Activated CD4-positive, alpha-beta memory T cell treated with anti-CD3 and anti-CD28 coated beads for 36 hours (primary cell): ENCODE measurements at regions of chr3 and their contacts with region 1.

Region 1: DNA sequence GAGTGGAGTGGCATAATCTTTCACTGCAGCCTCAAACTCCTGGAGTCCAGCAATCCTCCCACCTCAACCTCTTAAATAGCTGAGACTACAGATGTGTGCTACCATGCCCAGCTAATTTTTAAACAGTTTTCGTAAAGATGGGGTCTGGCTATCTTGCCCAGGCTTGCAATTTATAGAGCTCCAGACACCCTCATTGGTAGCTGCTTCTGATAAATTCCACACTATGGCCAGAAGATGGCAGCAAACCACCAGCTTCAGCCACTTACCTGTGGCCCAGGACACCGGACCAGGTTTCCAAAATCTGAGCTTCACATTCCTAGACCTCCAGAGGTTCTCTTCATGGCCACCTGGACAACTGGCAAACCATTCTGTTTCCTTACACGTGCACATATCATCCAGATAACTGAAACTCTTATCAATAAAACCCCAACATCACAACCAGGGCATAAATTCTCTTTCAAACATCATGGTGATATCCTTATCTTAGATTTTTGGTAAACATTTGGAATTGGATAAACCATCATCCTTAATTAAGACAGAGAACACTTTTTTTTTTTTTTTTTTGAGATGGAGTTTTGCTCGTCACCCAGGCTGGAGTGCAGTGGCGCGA is 28.9 kb downstream of the FBXW12 start:
- DNase-seq: peak; percentile 74
- H3K4me3 Mint-ChIP-seq: no peak overlapping the region
- H3K27ac Mint-ChIP-seq: no peak overlapping the region
- H3K4me1 Mint-ChIP-seq: no peaks in the 10 kb centered on the region
- H3K27me3 Mint-ChIP-seq: peaks cover 1% of the 10 kb centered on the region

Region 2: DNA sequence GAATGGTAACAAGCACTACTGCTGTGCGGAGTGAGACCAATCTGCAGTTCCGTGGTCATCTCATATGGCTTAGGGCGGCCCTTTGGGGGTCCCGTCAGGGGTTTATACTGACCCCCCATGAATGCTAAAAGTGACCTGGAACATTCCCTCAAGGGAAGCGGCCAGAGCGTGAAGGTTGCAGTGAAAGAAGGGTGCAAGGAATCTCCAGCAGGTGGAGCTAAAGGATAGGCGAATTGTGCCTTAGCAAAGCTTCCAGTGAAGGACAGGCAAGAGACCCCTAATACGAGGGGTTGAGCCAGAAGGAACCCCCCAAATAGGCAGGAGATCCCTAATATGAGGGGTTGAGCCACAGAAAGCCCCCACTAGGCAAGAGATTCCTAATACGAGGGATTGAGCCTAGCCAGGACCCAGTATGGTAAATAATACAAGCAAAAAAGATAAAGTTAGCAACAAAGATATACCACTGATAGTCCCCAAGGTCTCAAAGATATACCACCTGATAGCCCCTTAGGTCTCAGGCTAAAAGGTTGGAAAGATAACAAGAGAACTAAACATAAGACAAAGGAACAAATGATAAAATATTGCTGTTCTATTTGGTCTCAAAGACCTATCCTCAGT is 127.2 kb before region 1 on chr3:
- CTCF ChIA-PET with region 1: interaction called, 33 read pairs
- POLR2A ChIA-PET with region 1: no interaction called
- intact Hi-C with region 1: no loop called
- DNase-seq: peak; percentile 65
- H3K4me3 Mint-ChIP-seq: no peak overlapping the region
- H3K27ac Mint-ChIP-seq: no peak overlapping the region
- H3K4me1 Mint-ChIP-seq: peaks cover 18% of the 10 kb centered on the region
- H3K27me3 Mint-ChIP-seq: no peaks in the 10 kb centered on the region

Region 3: DNA sequence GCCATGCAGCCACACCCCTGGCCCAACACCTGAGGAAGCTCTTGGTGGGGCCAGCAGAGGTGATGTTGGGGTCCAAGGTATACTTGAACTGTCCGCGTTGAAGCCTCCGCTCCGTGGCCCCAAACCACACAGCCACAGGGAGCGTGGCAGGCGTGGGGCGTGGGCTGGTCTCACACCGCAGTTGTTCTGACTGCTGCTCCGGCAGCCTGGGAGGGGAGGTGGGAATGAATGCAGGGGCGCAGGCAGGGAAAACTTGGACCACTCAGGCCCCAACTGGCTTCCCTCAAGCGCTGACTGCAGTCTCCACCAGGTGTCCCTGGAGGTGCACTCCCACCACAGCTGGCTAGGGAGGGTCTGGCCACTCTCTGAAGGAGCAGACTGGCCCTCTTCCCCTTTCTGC is 14.6 kb after region 1 on chr3:
- CTCF ChIA-PET with region 1: interaction called, 14 read pairs
- POLR2A ChIA-PET with region 1: no interaction called
- intact Hi-C with region 1: no loop called
- DNase-seq: no peak
- H3K4me3 Mint-ChIP-seq: no peak overlapping the region
- H3K27ac Mint-ChIP-seq: no peak overlapping the region
- H3K4me1 Mint-ChIP-seq: no peaks in the 10 kb centered on the region
- H3K27me3 Mint-ChIP-seq: no peaks in the 10 kb centered on the region

Region 4: DNA sequence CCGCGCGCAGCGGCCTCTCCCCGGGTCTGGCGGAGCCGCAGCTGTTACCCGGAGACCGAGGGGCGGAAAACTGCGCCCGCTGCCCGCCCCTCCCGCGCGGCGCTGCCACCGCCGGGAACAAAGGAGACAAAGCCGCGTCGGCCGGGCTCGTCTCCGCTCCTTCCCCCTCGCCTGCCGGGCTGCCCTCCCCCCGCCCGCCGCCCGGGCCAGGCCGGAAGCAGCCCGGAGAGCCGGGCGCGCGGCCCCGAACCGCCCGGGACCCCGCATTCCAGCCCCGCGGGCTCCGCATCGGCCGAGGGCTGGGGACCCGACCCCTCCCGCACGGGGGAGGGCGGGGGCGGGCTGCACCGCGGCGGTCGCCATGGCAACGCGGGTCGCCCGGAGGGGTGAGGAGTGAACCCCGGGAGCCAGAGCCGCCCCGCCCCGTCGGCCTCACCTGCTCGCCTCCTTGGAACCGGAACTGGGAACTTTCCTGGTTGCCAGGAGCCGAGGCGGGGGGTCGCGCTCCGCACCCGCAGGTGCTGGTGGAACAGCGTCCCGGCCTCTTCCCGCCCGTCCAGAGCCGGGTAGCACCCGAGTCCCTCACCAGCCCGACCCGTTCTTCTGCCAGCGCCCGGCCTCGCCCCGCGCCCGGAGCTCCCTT is 28.5 kb after region 1 on chr3:
- CTCF ChIA-PET with region 1: interaction called, 290 read pairs
- POLR2A ChIA-PET with region 1: no interaction called
- intact Hi-C with region 1: no loop called
- DNase-seq: peak; percentile 61
- H3K4me3 Mint-ChIP-seq: peak overlapping the region; percentile 69
- H3K27ac Mint-ChIP-seq: no peak overlapping the region
- H3K4me1 Mint-ChIP-seq: peaks cover 4% of the 10 kb centered on the region
- H3K27me3 Mint-ChIP-seq: no peaks in the 10 kb centered on the region

Region 5: GRCh38 chr3:48507351-48508061 is 106.6 kb after region 1 on chr3:
- CTCF ChIA-PET with region 1: interaction called, 25 read pairs
- POLR2A ChIA-PET with region 1: no interaction called
- intact Hi-C with region 1: no loop called
- DNase-seq: peak; percentile 84
- H3K4me3 Mint-ChIP-seq: no peak overlapping the region
- H3K27ac Mint-ChIP-seq: peak overlapping the region; percentile 74
- H3K4me1 Mint-ChIP-seq: peaks cover 42% of the 10 kb centered on the region
- H3K27me3 Mint-ChIP-seq: no peaks in the 10 kb centered on the region

Region 6: GRCh38 chr3:48556793-48557626 is 156.1 kb after region 1 on chr3 and contains the start of gene PFKFB4:
- CTCF ChIA-PET with region 1: interaction called, 58 read pairs
- POLR2A ChIA-PET with region 1: interaction called, 3 read pairs
- intact Hi-C with region 1: no loop called
- DNase-seq: peak; percentile 100
- H3K4me3 Mint-ChIP-seq: peak within 1 kb of the TSS; percentile 83
- H3K27ac Mint-ChIP-seq: peak within 1 kb of the TSS; percentile 59
- H3K4me1 Mint-ChIP-seq: peaks cover 16% of the 10 kb centered on the region
- H3K27me3 Mint-ChIP-seq: no peaks in the 10 kb centered on the region
- total RNA-seq, gene PFKFB4: 19.4 to 22.4 TPM

Region 7: DNA sequence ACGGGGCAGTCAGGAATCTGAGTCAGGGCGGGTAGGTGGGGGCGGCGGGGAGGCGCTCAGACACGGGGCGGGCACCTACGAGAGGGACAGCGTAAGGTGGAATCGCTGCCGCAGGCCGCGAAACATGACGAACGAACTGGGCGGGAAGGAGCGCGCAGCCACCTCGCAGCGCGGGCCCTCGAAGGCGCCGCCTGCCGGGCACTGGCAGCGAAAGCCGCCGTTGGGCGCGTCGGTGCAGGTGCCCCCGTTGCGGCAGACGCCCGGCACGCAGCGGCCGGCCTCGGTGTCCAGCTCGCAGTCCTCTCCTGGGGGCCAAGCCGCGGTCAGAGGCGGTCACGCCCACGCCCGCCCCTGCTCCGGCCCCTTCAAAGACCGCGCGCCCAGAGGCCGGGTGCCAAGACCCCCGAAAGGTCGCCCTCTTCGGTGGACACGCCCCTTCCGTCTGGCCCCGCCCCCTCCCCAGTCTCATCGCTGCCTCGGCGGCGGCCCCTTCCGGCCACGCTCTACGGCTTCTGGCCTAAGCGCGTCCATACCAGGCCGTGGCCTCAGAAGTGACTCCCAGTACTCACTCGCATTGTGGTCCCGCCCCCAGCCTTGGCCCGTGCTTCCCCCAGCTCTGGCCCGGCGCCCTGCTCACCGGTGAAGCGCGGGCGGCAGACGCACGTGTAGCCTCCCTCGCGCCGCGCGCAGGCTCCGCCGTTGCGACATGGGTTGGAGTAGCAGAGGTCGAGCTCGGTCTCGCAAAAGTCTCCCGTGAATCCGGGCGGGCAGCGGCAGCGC is 255.3 kb after region 1 on chr3:
- CTCF ChIA-PET with region 1: interaction called, 5 read pairs
- POLR2A ChIA-PET with region 1: no interaction called
- intact Hi-C with region 1: loop called (anchors 1 kb)
- DNase-seq: peak; percentile 93
- H3K4me3 Mint-ChIP-seq: peak overlapping the region; percentile 79
- H3K27ac Mint-ChIP-seq: peak overlapping the region; percentile 84
- H3K4me1 Mint-ChIP-seq: peaks cover 5% of the 10 kb centered on the region
- H3K27me3 Mint-ChIP-seq: peaks cover 2% of the 10 kb centered on the region

Region 8: GRCh38 chr3:48835650-48836366 is 434.9 kb after region 1 on chr3:
- CTCF ChIA-PET with region 1: no interaction called
- POLR2A ChIA-PET with region 1: no interaction called
- intact Hi-C with region 1: no loop called
- DNase-seq: no peak
- H3K4me3 Mint-ChIP-seq: no peak overlapping the region
- H3K27ac Mint-ChIP-seq: no peak overlapping the region
- H3K4me1 Mint-ChIP-seq: peaks cover 13% of the 10 kb centered on the region
- H3K27me3 Mint-ChIP-seq: no peaks in the 10 kb centered on the region